CD8-positive, alpha-beta memory T cell (primary cell): ENCODE measurements at regions of chr17 and their contacts with region 1.

Region 1: DNA sequence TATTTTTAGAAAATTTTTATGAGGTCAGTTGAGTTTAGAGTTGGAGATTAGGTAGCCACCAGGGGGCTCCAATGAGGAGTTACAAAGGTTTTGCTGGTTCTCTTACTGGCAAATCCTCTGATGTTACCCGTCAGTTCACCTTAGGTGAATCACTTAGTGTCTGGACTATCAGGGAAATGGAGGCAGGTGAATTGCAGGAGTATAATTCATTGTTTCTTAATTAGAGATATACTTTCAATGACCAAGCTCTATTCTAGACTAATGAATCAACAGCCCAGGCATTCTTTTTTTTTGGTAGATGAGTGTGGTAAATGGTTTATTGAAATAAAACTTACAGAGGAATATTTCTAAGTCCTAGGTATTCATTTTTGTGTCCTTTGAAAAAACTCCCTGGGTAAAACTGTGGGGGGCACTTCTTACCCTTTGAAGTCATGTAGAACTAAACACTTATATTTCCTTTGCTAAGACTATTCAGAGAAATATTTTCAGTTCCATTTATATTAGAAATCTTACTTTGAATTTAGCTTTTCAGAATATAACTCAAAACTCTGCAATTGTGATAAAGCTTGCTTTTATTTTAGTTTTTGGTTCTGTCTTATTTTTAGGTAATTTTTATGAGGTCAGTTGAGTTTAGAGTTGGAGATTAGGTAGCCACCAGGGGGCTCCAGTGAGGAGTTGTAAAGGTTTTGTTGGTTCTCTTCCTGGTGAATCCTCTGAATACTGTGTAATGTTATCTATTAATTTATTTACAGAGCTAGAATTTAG is 17.7 kb downstream of the PSMD11 start:
- DNase-seq: peak; percentile 46 to 67 (median 56)
- H3K4me3 ChIP-seq: no peak overlapping the region
- H3K4me3 Mint-ChIP-seq: peak overlapping the region in 1 of 7 donors; percentile 23
- H3K27ac ChIP-seq: no peak overlapping the region
- H3K27ac Mint-ChIP-seq: peak overlapping the region; percentile 3 to 90 (median 26)
- H3K4me1 ChIP-seq: peaks cover 12% of the 10 kb centered on the region
- H3K4me1 Mint-ChIP-seq: peaks cover 22 to 44% (median 32%) of the 10 kb centered on the region in 3 donors
- H3K27me3 ChIP-seq: no peaks in the 10 kb centered on the region
- H3K27me3 Mint-ChIP-seq: no peaks in the 10 kb centered on the region

Region 2: DNA sequence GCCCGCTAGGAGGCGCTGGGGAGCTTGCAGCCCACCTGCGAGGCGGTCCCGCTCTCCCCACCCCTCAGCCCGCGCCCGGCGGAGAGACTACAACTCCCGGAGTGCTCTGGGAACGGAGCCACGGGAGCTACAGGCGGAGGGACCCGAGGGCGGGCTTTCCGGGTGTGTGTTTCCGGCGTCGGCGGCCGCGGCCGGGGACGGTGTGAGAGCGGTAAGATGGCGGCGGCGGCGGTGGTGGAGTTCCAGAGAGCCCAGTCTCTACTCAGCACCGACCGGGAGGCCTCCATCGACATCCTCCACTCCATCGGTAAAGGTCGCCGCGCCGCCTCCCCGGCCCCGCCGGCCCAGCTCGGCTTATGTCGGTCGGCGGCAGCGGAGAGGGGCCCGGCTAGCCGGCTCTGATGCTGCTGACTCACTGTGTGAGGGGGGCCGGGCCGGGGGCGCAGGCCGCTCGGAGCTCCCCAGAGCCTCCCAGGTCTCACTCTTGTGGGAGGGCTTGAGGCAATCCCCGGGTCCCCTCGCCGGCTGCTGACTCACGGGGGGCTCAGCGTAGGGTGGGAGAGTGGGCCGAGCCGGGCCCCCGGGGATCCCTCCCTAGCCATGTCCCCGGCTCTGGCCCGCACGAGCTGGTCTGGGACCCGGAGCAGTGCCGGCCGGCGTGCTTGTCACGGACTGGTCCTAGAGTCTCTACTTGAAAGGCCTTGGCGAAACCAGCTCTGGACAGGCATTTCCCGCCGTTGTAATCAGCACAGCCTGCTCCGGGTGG is 17.5 kb before region 1 on chr17 and contains the start of gene PSMD11:
- CTCF ChIA-PET with region 1: interaction called, 40 read pairs
- POLR2A ChIA-PET with region 1: no interaction called
- DNase-seq: peak; percentile 98 to 99 (median 99)
- H3K4me3 ChIP-seq: peak within 1 kb of the TSS; percentile 85
- H3K4me3 Mint-ChIP-seq: peak within 1 kb of the TSS; percentile 78 to 92 (median 89)
- H3K27ac ChIP-seq: peak within 1 kb of the TSS; percentile 76
- H3K27ac Mint-ChIP-seq: peak within 1 kb of the TSS; percentile 66 to 95 (median 84)
- H3K4me1 ChIP-seq: peaks cover 27% of the 10 kb centered on the region
- H3K4me1 Mint-ChIP-seq: peaks cover 34 to 40% (median 39%) of the 10 kb centered on the region in 3 donors
- H3K27me3 ChIP-seq: no peaks in the 10 kb centered on the region
- H3K27me3 Mint-ChIP-seq: peaks cover 0 to 4% of the 10 kb centered on the region in 2 donors
- total RNA-seq, gene PSMD11: 175 to 187 TPM

Region 3: GRCh38 chr17:32449963-32450362 is 12.1 kb before region 1 on chr17:
- CTCF ChIA-PET with region 1: interaction called, 40 read pairs
- POLR2A ChIA-PET with region 1: no interaction called
- DNase-seq: no peak
- H3K4me3 ChIP-seq: no peak overlapping the region
- H3K4me3 Mint-ChIP-seq: no peak overlapping the region
- H3K27ac ChIP-seq: no peak overlapping the region
- H3K27ac Mint-ChIP-seq: peak overlapping the region in 2 of 8 donors; percentile 12 to 58
- H3K4me1 ChIP-seq: peaks cover 23% of the 10 kb centered on the region
- H3K4me1 Mint-ChIP-seq: peaks cover 56 to 77% (median 69%) of the 10 kb centered on the region in 3 donors
- H3K27me3 ChIP-seq: no peaks in the 10 kb centered on the region
- H3K27me3 Mint-ChIP-seq: no peaks in the 10 kb centered on the region

Region 4: DNA sequence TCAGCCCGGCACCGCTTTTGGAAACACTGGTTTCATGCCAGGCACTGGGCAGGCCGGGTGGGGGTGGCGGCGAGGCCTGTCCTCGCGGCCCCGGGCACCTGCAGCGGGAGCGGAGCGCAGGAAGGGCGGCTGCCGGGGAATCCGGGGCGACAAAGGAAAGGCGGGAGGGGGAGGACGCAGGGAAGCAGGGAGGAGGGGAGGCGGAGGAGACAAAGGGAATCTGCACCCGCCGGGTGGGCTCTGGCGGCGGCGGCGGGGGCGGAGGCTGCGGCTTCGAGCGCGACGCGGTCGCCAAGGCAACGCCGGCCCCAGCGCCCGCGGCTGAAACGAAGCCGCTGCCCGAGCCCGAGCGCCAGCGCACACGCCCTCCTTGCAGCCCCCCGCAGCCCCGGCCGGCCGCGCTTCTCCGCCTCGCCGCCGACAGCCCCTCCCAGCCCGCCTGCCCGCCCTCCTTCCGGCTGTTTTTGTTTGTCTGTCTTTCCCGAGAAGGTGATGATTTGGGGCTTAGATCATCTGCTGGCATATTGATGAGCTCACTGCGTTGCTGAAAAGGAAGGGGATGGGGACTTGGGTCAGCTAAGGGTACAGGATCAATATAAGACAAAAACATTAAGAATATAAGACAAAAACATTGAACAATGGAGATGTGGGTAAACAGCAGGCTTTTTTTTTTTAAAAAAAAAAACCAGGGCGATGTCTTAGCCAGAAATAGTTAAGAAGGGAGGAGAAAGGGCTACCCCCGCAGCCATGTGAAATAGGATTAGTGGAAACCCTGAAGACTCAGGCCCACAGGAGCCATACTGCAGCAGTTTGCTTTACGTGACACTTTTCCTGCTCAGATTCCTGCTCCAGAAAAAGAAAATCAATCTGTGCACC is 57.4 kb after region 1 on chr17:
- CTCF ChIA-PET with region 1: interaction called, 13 read pairs
- POLR2A ChIA-PET with region 1: no interaction called
- DNase-seq: peak; percentile 44 to 77 (median 67)
- H3K4me3 ChIP-seq: peak overlapping the region; percentile 46
- H3K4me3 Mint-ChIP-seq: peak overlapping the region; percentile 79 to 86 (median 84)
- H3K27ac ChIP-seq: peak overlapping the region; percentile 75
- H3K27ac Mint-ChIP-seq: peak overlapping the region; percentile 87 to 97 (median 96)
- H3K4me1 ChIP-seq: peaks cover 76% of the 10 kb centered on the region
- H3K4me1 Mint-ChIP-seq: peaks cover 67 to 82% (median 68%) of the 10 kb centered on the region in 3 donors
- H3K27me3 ChIP-seq: no peaks in the 10 kb centered on the region
- H3K27me3 Mint-ChIP-seq: no peaks in the 10 kb centered on the region